CD8-positive, alpha-beta memory T cell (primary cell): ENCODE measurements at regions of chr1 and their contacts with region 1.

Region 1: DNA sequence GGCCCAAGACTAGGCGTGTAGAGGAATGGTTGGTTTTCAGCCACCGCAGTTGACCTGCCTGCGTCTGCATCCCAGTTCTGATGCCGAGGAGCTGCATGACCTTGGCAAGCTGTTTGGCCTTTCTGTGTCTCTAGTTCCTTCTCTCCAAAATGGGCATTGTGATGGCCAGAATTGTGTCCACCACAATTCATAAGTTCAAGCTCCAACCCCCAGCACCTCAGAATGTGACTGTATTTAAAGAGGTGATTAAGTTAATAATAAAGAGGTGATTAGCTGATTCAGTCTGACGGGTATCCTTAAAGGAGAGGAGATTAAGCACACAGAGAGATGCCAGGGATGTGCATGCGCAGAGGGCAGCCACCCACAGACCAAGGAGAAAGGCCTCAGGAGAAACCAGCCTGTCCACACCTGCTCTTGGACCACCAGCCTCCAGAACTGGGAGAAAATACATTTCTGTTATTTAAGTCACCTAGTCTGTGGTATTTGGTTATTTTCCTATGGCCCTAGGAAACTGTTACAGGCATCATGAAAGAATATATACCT is 28.5 kb downstream of the MAB21L3 start:
- DNase-seq: no peak
- H3K4me3 ChIP-seq: no peak overlapping the region
- H3K4me3 Mint-ChIP-seq: no peak overlapping the region
- H3K27ac ChIP-seq: no peak overlapping the region
- H3K27ac Mint-ChIP-seq: peak overlapping the region in 1 of 8 donors; percentile 32
- H3K4me1 ChIP-seq: no peaks in the 10 kb centered on the region
- H3K4me1 Mint-ChIP-seq: peaks cover 5 to 7% (median 5%) of the 10 kb centered on the region in 3 donors
- H3K27me3 ChIP-seq: no peaks in the 10 kb centered on the region
- H3K27me3 Mint-ChIP-seq: peaks cover 13 to 19% of the 10 kb centered on the region in 2 donors

Region 2: GRCh38 chr1:116110567-116111523 is 28.8 kb before region 1 on chr1 and contains the start of gene MAB21L3:
- CTCF ChIA-PET with region 1: no interaction called
- POLR2A ChIA-PET with region 1: no interaction called
- DNase-seq: no peak
- H3K4me3 ChIP-seq: no peak within 1 kb of the TSS
- H3K4me3 Mint-ChIP-seq: no peak within 1 kb of the TSS
- H3K27ac ChIP-seq: no peak within 1 kb of the TSS
- H3K27ac Mint-ChIP-seq: no peak within 1 kb of the TSS
- H3K4me1 ChIP-seq: no peaks in the 10 kb centered on the region
- H3K4me1 Mint-ChIP-seq: no peaks in the 10 kb centered on the region
- H3K27me3 ChIP-seq: no peaks in the 10 kb centered on the region
- H3K27me3 Mint-ChIP-seq: peaks cover 0 to 44% of the 10 kb centered on the region in 2 donors
- total RNA-seq, gene MAB21L3: not detected

Region 3: GRCh38 chr1:116168277-116169097 is 28.8 kb after region 1 on chr1:
- CTCF ChIA-PET with region 1: interaction called, 29 read pairs
- POLR2A ChIA-PET with region 1: interaction called, 3 read pairs
- DNase-seq: peak; percentile 77 to 88 (median 79)
- H3K4me3 ChIP-seq: peak overlapping the region; percentile 73
- H3K4me3 Mint-ChIP-seq: peak overlapping the region; percentile 75 to 92 (median 82)
- H3K27ac ChIP-seq: peak overlapping the region; percentile 5
- H3K27ac Mint-ChIP-seq: peak overlapping the region; percentile 78 to 95 (median 88)
- H3K4me1 ChIP-seq: peaks cover 14% of the 10 kb centered on the region
- H3K4me1 Mint-ChIP-seq: peaks cover 14 to 19% (median 16%) of the 10 kb centered on the region in 3 donors
- H3K27me3 ChIP-seq: peaks cover 3% of the 10 kb centered on the region
- H3K27me3 Mint-ChIP-seq: peaks cover 0 to 1% of the 10 kb centered on the region in 2 donors

Region 4: DNA sequence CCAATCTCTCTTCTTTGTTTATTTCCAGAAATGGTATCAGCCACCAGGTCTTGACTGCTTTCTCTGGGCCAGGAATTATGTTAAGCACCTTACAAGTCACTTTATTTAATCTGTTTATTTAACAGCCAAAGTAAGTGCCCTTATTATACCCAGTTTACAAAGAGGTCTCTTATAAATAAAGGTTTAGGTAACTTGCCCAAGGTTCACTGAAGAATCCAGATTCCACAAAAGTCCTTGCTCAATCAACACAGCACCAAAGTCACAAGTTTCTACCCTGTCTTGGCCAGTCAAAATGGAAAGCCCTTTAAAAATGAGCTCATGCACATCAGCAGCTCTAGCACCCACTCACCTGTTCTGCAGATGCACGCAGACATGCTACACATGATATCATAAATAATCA is 205.3 kb after region 1 on chr1:
- CTCF ChIA-PET with region 1: interaction called, 17 read pairs
- POLR2A ChIA-PET with region 1: no interaction called
- DNase-seq: no peak
- H3K4me3 ChIP-seq: no peak overlapping the region
- H3K4me3 Mint-ChIP-seq: no peak overlapping the region
- H3K27ac ChIP-seq: no peak overlapping the region
- H3K27ac Mint-ChIP-seq: peak overlapping the region in 6 of 8 donors; percentile 54 to 92 (median 81)
- H3K4me1 ChIP-seq: peaks cover 64% of the 10 kb centered on the region
- H3K4me1 Mint-ChIP-seq: peaks cover 25 to 41% (median 36%) of the 10 kb centered on the region in 3 donors
- H3K27me3 ChIP-seq: no peaks in the 10 kb centered on the region
- H3K27me3 Mint-ChIP-seq: peaks cover 0 to 5% of the 10 kb centered on the region in 2 donors

Region 5: DNA sequence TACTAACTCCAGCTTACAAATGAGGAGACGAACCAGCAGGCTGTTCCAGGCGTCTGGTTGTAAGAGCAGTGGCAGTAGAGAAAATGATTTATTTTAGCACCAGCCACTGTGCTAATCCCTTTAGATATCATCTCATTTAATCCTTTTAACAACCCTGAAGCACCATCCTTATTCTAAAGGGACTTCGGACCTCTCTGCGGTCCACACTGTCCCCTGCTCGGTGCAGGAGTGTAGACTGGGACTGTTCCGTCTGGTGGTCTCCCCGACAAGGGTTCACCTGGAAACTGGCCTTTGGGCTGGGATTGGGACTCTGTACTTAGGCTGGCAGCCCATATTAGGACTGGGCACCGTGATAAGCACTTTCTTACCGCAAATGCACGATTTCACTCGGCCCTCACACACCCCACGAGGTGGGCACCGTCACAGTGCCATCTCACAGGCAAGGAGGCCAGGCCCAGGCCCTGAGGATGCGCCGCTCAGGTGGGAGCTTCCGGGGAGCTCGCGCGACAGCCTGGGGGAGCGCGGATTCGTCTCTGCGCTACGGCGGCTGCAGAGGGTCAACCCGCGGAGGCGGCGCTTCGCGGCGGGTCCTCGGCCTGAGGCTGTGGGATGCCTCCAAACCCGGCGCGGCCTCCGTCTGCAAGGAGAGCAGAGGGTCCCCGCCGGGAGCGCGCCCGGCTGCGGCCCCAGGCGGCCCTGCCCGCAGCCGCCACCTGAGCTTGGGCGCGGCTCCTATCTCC is 278.6 kb after region 1 on chr1:
- CTCF ChIA-PET with region 1: interaction called, 12 read pairs
- POLR2A ChIA-PET with region 1: no interaction called
- DNase-seq: peak; percentile 79 to 91 (median 86)
- H3K4me3 ChIP-seq: peak overlapping the region; percentile 98
- H3K4me3 Mint-ChIP-seq: peak overlapping the region; percentile 78 to 96 (median 91)
- H3K27ac ChIP-seq: peak overlapping the region; percentile 85
- H3K27ac Mint-ChIP-seq: peak overlapping the region; percentile 88 to 98 (median 96)
- H3K4me1 ChIP-seq: peaks cover 25% of the 10 kb centered on the region
- H3K4me1 Mint-ChIP-seq: peaks cover 25 to 43% (median 42%) of the 10 kb centered on the region in 3 donors
- H3K27me3 ChIP-seq: no peaks in the 10 kb centered on the region
- H3K27me3 Mint-ChIP-seq: no peaks in the 10 kb centered on the region

Region 6: GRCh38 chr1:116485071-116485735 is 345.5 kb after region 1 on chr1:
- CTCF ChIA-PET with region 1: interaction called, 202 read pairs
- POLR2A ChIA-PET with region 1: interaction called, 3 read pairs
- DNase-seq: peak; percentile 68 to 87 (median 77)
- H3K4me3 ChIP-seq: no peak overlapping the region
- H3K4me3 Mint-ChIP-seq: no peak overlapping the region
- H3K27ac ChIP-seq: no peak overlapping the region
- H3K27ac Mint-ChIP-seq: no peak overlapping the region
- H3K4me1 ChIP-seq: no peaks in the 10 kb centered on the region
- H3K4me1 Mint-ChIP-seq: peaks cover 0 to 3% (median 0%) of the 10 kb centered on the region in 3 donors
- H3K27me3 ChIP-seq: no peaks in the 10 kb centered on the region
- H3K27me3 Mint-ChIP-seq: peaks cover 0 to 1% of the 10 kb centered on the region in 2 donors